Activated CD4-positive, alpha-beta T cell treated with anti-CD3 and anti-CD28 coated beads, Interleukin-2, amount 10 ng/mL, durations not matched to agents 24 days and 14 days (primary cell): ENCODE measurements at regions of chrX and their contacts with region 1.

Region 1: DNA sequence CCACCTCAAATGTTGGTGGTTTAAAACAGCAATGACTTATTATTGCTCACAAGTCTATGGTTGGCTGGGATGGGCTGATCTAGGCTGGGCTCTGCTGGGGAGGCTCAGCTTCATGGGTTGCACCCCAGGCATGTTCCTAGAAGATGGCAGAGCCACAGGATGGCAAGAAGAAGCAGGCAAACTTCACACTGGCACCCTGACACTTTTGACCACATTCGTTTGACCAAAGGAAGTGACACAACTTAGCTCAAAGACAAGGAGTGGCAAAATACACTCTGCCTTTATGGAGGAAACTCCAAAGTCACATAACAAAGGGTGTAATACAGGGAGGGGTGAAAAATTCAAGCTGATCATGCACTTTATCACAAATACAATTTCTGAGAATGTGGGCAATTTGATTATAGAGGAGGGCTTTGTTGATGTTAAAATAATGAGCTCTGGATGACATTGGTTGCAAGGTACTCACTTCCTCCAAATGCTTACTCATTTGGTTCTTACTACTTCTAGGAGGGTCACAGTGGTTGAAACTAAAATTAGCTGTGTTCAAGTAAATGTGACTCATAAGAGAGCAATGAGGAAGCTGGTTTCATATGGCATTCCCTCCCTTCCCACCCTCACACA is 249.2 kb upstream of the RPS6KA3 start:
- DNase-seq: peak; percentile 69
- H3K4me3 Mint-ChIP-seq: peak overlapping the region; percentile 45
- H3K27ac Mint-ChIP-seq: peak overlapping the region; percentile 91
- H3K4me1 Mint-ChIP-seq: peaks cover 40% of the 10 kb centered on the region
- H3K27me3 Mint-ChIP-seq: peaks cover 9% of the 10 kb centered on the region

Region 2: GRCh38 chrX:20252381-20253231 is 263.3 kb before region 1 on chrX:
- intact Hi-C with region 1: loop called (anchors 2 kb)
- DNase-seq: peak; percentile 91
- H3K4me3 Mint-ChIP-seq: no peak overlapping the region
- H3K27ac Mint-ChIP-seq: peak overlapping the region; percentile 62
- H3K4me1 Mint-ChIP-seq: peaks cover 24% of the 10 kb centered on the region
- H3K27me3 Mint-ChIP-seq: no peaks in the 10 kb centered on the region

Region 3: DNA sequence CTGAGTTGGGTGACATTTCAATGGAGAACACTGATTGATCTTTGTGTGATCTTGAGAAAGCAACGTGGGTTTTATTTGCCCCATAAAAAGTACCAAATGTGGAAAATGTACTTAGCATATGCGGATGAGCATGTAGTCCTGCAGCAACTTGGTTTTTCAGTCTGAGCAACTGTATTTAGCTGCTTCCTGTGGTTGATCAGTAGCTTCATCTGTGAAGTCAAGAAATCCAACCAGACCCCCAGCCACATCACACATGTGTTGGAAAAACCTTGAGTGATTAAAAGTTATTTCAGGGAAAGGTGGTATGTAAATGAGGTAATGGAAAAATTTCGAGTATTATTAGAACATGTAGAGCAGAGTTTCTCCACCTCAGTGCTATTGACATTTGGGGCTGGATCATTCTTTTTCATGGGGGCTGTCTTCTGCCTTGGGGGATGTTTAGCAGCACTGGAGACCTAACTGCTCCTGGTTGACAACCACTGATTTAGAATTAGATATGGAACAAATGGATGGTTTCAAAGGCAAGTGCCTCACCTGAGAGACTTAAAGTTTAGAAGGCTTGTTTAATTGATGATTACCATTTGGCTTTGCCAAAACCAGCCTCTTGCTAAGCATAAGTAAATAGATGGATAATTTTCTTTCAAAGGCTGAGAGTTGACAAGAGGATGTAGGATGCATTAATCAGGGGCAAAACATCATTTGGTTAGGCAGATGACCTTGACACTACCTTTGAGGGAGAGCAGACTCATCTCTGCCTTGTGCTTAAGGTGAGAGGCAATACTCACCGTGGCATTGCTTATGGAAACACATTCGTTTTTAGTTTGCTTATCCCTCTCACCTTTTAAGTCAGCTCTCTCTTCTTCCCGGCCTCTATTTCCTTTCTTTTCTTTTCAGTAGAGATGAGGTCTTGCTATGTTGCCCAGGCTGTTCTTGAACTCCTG is 56.3 kb before region 1 on chrX:
- intact Hi-C with region 1: loop called (anchors 2 kb)
- DNase-seq: no peak
- H3K4me3 Mint-ChIP-seq: peak overlapping the region; percentile 26
- H3K27ac Mint-ChIP-seq: peak overlapping the region; percentile 70
- H3K4me1 Mint-ChIP-seq: peaks cover 30% of the 10 kb centered on the region
- H3K27me3 Mint-ChIP-seq: no peaks in the 10 kb centered on the region

Region 4: DNA sequence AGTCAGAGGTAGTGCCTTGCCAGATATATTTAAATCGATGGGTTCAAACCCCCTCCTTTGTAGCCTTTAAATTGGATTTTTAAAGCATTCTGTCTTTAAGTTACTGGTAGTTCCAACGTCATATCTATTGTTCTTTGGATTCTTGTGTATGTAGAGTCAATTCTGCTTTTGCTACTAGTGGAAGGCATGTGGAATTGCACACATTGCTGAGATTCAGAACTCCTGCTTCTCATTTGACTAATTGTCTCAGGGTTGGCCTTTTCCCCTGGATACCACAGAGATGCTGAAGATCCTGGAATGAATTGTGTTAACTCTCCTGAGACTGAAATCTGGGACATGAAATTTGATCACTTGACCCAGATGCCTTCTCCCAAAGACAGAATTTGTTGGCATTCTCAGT is 79.0 kb after region 1 on chrX:
- intact Hi-C with region 1: loop called (anchors 5 kb)
- DNase-seq: no peak
- H3K4me3 Mint-ChIP-seq: no peak overlapping the region
- H3K27ac Mint-ChIP-seq: no peak overlapping the region
- H3K4me1 Mint-ChIP-seq: peaks cover 14% of the 10 kb centered on the region
- H3K27me3 Mint-ChIP-seq: no peaks in the 10 kb centered on the region